Naive thymus-derived CD4-positive, alpha-beta T cell (primary cell): ENCODE measurements at regions of chr17 and their contacts with region 1.

Region 1: GRCh38 chr17:78736526-78737079 is 45.5 kb downstream of the CYTH1 start:
- DNase-seq: peak; percentile 45 to 82 (median 78)
- ATAC-seq: peak; percentile 91
- H3K4me3 ChIP-seq: peak overlapping the region; percentile 75
- H3K4me3 Mint-ChIP-seq: peak overlapping the region; percentile 90 to 97 (median 94)
- H3K27ac ChIP-seq: peak overlapping the region; percentile 79
- H3K27ac Mint-ChIP-seq: peak overlapping the region; percentile 88 to 95 (median 92)
- H3K4me1 ChIP-seq: peaks cover 71 to 80% of the 10 kb centered on the region in 2 donors
- H3K4me1 Mint-ChIP-seq: peaks cover 78 to 97% (median 88%) of the 10 kb centered on the region in 7 donors
- H3K27me3 ChIP-seq: no peaks in the 10 kb centered on the region
- H3K27me3 Mint-ChIP-seq: no peaks in the 10 kb centered on the region

Region 2: GRCh38 chr17:78497115-78497540 is 239.5 kb before region 1 on chr17:
- CTCF ChIA-PET with region 1: no interaction called
- POLR2A ChIA-PET with region 1: no interaction called
- intact Hi-C with region 1: loop called in 1 of 2 experiments (anchors 2 kb)
- DNase-seq: peak in 8 of 9 donors; percentile 21 to 64 (median 48)
- ATAC-seq: peak; percentile 76
- H3K4me3 ChIP-seq: no peak overlapping the region
- H3K4me3 Mint-ChIP-seq: no peak overlapping the region
- H3K27ac ChIP-seq: no peak overlapping the region
- H3K27ac Mint-ChIP-seq: no peak overlapping the region
- H3K4me1 ChIP-seq: no peaks in the 10 kb centered on the region
- H3K4me1 Mint-ChIP-seq: peaks cover 0 to 2% (median 0%) of the 10 kb centered on the region in 7 donors
- H3K27me3 ChIP-seq: no peaks in the 10 kb centered on the region
- H3K27me3 Mint-ChIP-seq: peaks cover 0 to 4% (median 0%) of the 10 kb centered on the region in 5 donors

Region 3: GRCh38 chr17:78723001-78723796 is 13.4 kb before region 1 on chr17:
- CTCF ChIA-PET with region 1: interaction called, 9 read pairs
- POLR2A ChIA-PET with region 1: interaction called, 20 read pairs
- intact Hi-C with region 1: loop called (anchors 1 to 2 kb)
- DNase-seq: no peak
- ATAC-seq: no peak
- H3K4me3 ChIP-seq: no peak overlapping the region
- H3K4me3 Mint-ChIP-seq: peak overlapping the region; percentile 33 to 88 (median 78)
- H3K27ac ChIP-seq: peak overlapping the region; percentile 50
- H3K27ac Mint-ChIP-seq: peak overlapping the region; percentile 50 to 96 (median 90)
- H3K4me1 ChIP-seq: peaks cover 95 to 97% of the 10 kb centered on the region in 2 donors
- H3K4me1 Mint-ChIP-seq: peaks cover 88 to 99% (median 94%) of the 10 kb centered on the region in 7 donors
- H3K27me3 ChIP-seq: no peaks in the 10 kb centered on the region
- H3K27me3 Mint-ChIP-seq: no peaks in the 10 kb centered on the region

Region 4: GRCh38 chr17:78774956-78775571 is 38.5 kb after region 1 on chr17:
- CTCF ChIA-PET with region 1: interaction called, 6 read pairs
- POLR2A ChIA-PET with region 1: interaction called, 18 read pairs
- intact Hi-C with region 1: loop called in 1 of 2 experiments (anchors 5 kb)
- DNase-seq: peak in 7 of 9 donors; percentile 49 to 71 (median 55)
- ATAC-seq: peak; percentile 55
- H3K4me3 ChIP-seq: peak overlapping the region; percentile 55
- H3K4me3 Mint-ChIP-seq: peak overlapping the region in 8 of 10 donors; percentile 85 to 98 (median 92)
- H3K27ac ChIP-seq: peak overlapping the region; percentile 81
- H3K27ac Mint-ChIP-seq: peak overlapping the region in 8 of 9 donors; percentile 91 to 98 (median 97)
- H3K4me1 ChIP-seq: peaks cover 67 to 71% of the 10 kb centered on the region in 2 donors
- H3K4me1 Mint-ChIP-seq: peaks cover 34 to 79% (median 69%) of the 10 kb centered on the region in 7 donors
- H3K27me3 ChIP-seq: no peaks in the 10 kb centered on the region
- H3K27me3 Mint-ChIP-seq: no peaks in the 10 kb centered on the region

Region 5: DNA sequence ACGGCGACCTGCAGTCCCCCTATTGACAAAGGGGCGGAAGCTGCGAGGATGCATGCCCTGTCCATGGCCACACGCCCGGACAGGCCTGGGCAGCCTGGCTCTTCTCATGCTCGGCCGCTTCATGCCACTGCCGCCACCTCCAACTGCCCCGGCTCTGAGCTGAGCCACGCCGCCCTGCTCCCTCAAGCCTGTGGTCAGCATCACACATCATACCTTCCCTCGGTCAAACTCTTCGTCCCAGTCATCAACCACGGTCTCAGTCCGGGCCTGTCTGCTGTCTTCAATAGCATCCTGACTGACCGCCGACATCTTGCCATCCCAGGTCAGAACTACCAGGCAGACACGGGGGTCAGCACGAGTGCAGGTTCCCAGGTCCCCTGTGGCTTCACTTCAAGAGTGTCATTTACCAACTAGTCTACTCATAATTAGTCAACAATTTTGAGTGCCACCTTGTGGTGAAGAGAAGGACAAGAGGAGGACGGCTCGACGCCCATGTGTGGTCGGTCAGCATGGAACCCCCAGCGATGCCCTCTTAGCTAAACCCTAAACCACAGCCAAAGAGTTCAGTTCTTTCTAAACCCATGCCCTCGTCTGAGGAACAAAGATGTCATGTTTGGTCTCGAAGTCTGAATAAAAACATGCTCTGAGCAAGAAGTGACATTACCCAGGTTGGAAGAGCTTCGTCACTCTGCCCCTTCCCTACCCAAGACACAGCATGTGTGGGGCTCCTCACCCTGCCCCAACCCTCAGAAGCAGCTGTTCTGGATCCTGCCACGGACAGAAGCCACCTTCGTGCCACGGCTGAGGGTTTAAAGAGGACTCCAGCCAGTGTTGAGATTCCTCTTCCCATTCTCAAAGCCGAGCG is 62.3 kb after region 1 on chr17:
- CTCF ChIA-PET with region 1: interaction called, 4 read pairs
- POLR2A ChIA-PET with region 1: interaction called, 4 read pairs
- intact Hi-C with region 1: loop called in 1 of 2 experiments (anchors 1 kb)
- DNase-seq: peak in 5 of 9 donors; percentile 54 to 65 (median 59)
- ATAC-seq: peak; percentile 56
- H3K4me3 ChIP-seq: no peak overlapping the region
- H3K4me3 Mint-ChIP-seq: peak overlapping the region in 8 of 10 donors; percentile 11 to 60 (median 45)
- H3K27ac ChIP-seq: no peak overlapping the region
- H3K27ac Mint-ChIP-seq: peak overlapping the region; percentile 68 to 95 (median 86)
- H3K4me1 ChIP-seq: peaks cover 7 to 27% of the 10 kb centered on the region in 2 donors
- H3K4me1 Mint-ChIP-seq: peaks cover 42 to 78% (median 63%) of the 10 kb centered on the region in 7 donors
- H3K27me3 ChIP-seq: no peaks in the 10 kb centered on the region
- H3K27me3 Mint-ChIP-seq: no peaks in the 10 kb centered on the region

Region 6: GRCh38 chr17:79581324-79581932 is 844.8 kb after region 1 on chr17:
- CTCF ChIA-PET with region 1: no interaction called
- POLR2A ChIA-PET with region 1: no interaction called
- intact Hi-C with region 1: no loop called
- DNase-seq: no peak
- ATAC-seq: no peak
- H3K4me3 ChIP-seq: no peak overlapping the region
- H3K4me3 Mint-ChIP-seq: no peak overlapping the region
- H3K27ac ChIP-seq: no peak overlapping the region
- H3K27ac Mint-ChIP-seq: no peak overlapping the region
- H3K4me1 ChIP-seq: no peaks in the 10 kb centered on the region
- H3K4me1 Mint-ChIP-seq: peaks cover 0 to 3% (median 0%) of the 10 kb centered on the region in 7 donors
- H3K27me3 ChIP-seq: no peaks in the 10 kb centered on the region
- H3K27me3 Mint-ChIP-seq: peaks cover 0 to 40% (median 11%) of the 10 kb centered on the region in 5 donors